PC-9 (cell line): ENCODE measurements at regions of chr1 and their contacts with region 1.

Region 1: GRCh38 chr1:50968158-50968820 is 1.8 kb upstream of the CDKN2C start:
- DNase-seq: peak; percentile 68 to 93
- H3K4me3 ChIP-seq: peak overlapping the region; percentile 86
- H3K27ac ChIP-seq: peak overlapping the region; percentile 62
- H3K4me1 ChIP-seq: peaks cover 24% of the 10 kb centered on the region
- H3K27me3 ChIP-seq: no peaks in the 10 kb centered on the region
- CTCF ChIP-seq: peak; percentile 38; the same call in 1 of the 2 replicates

Region 2: DNA sequence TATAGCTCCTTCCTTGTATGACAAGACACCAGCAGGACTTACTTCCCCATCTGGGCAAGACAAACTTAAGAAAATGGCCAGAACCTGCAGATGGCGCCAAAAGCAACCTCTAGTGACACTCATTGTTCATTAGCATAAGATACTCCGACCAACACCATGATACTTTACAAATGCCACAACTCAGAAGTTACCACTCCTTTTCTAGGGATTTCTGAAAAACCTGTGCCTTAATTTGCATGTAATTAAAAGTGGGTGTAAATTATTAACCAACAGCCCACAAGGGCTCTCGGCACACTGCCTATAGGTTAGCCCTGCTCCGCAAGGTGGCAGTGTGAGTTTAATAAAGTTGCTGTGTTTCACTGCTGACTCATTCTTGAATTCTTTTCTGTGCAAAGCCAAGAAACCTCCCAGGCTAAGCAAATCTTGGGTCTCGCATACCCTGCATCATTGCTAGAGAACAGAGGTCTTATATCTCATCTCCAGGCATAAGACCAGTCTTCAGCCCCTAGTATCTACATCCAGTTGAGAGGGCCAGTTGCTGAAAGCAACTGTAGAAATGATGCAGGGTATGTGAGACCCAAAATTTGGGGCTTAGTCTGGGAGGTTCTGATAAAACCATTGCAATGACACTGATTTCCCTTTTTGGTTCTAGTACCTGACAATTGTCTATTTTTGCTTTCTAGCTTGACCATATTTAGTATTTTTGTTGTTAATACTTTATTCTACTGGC is 94.7 kb before region 1 on chr1:
- CTCF ChIA-PET with region 1: interaction called, 3 read pairs
- POLR2A ChIA-PET with region 1: no interaction called
- intact Hi-C with region 1: loop called (anchors 5 kb)
- DNase-seq: peak; percentile 49 to 63
- H3K4me3 ChIP-seq: no peak overlapping the region
- H3K27ac ChIP-seq: no peak overlapping the region
- H3K4me1 ChIP-seq: no peaks in the 10 kb centered on the region
- H3K27me3 ChIP-seq: no peaks in the 10 kb centered on the region
- CTCF ChIP-seq: peak; percentile 61; the same call in 1 of the 2 replicates

Region 3: GRCh38 chr1:50929376-50929958 is 38.8 kb before region 1 on chr1:
- CTCF ChIA-PET with region 1: interaction called, 4 read pairs
- POLR2A ChIA-PET with region 1: no interaction called
- intact Hi-C with region 1: loop called (anchors 5 kb)
- DNase-seq: no peak
- H3K4me3 ChIP-seq: no peak overlapping the region
- H3K27ac ChIP-seq: peak overlapping the region; percentile 29; the same call in 1 of the 2 replicates
- H3K4me1 ChIP-seq: no peaks in the 10 kb centered on the region
- H3K27me3 ChIP-seq: no peaks in the 10 kb centered on the region
- CTCF ChIP-seq: peak; percentile 77

Region 4: GRCh38 chr1:50949286-50949982 is 18.9 kb before region 1 on chr1:
- CTCF ChIA-PET with region 1: no interaction called
- POLR2A ChIA-PET with region 1: interaction called, 12 read pairs
- intact Hi-C with region 1: no loop called
- DNase-seq: no peak
- H3K4me3 ChIP-seq: no peak overlapping the region
- H3K27ac ChIP-seq: no peak overlapping the region
- H3K4me1 ChIP-seq: no peaks in the 10 kb centered on the region
- H3K27me3 ChIP-seq: no peaks in the 10 kb centered on the region
- CTCF ChIP-seq: no peak

Region 5: GRCh38 chr1:51070640-51071039 is 102.4 kb after region 1 on chr1:
- CTCF ChIA-PET with region 1: no interaction called
- POLR2A ChIA-PET with region 1: no interaction called
- intact Hi-C with region 1: loop called (anchors 5 kb)
- DNase-seq: peak in 1 of 2 experiments; percentile 90
- H3K4me3 ChIP-seq: peak overlapping the region; percentile 9; the same call in 1 of the 2 replicates
- H3K27ac ChIP-seq: peak overlapping the region; percentile 94
- H3K4me1 ChIP-seq: peaks cover 28% of the 10 kb centered on the region
- H3K27me3 ChIP-seq: no peaks in the 10 kb centered on the region
- CTCF ChIP-seq: no peak

Region 6: DNA sequence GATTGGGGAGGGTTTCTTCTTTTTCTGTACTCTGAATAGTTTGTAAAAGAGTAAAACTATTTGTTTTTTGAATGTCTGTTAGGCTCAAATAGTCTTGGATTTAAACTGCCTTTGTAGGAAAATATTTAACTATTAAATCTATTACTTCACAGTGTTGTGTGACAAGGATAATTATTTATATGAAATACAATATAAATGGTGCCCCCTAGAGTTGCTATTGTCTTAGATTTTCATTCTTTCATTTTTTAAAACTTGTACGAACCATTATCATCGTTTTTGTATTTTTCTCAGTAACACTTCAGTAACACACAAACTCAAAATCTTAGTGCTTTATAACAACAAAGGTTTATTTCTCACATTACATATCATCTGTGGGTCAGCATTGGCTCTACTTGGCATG is 171.2 kb after region 1 on chr1:
- CTCF ChIA-PET with region 1: no interaction called
- POLR2A ChIA-PET with region 1: no interaction called
- intact Hi-C with region 1: loop called (anchors 5 kb)
- DNase-seq: no peak
- H3K4me3 ChIP-seq: no peak overlapping the region
- H3K27ac ChIP-seq: no peak overlapping the region
- H3K4me1 ChIP-seq: no peaks in the 10 kb centered on the region
- H3K27me3 ChIP-seq: no peaks in the 10 kb centered on the region
- CTCF ChIP-seq: peak; percentile 50; the same call in 1 of the 2 replicates

Region 7: DNA sequence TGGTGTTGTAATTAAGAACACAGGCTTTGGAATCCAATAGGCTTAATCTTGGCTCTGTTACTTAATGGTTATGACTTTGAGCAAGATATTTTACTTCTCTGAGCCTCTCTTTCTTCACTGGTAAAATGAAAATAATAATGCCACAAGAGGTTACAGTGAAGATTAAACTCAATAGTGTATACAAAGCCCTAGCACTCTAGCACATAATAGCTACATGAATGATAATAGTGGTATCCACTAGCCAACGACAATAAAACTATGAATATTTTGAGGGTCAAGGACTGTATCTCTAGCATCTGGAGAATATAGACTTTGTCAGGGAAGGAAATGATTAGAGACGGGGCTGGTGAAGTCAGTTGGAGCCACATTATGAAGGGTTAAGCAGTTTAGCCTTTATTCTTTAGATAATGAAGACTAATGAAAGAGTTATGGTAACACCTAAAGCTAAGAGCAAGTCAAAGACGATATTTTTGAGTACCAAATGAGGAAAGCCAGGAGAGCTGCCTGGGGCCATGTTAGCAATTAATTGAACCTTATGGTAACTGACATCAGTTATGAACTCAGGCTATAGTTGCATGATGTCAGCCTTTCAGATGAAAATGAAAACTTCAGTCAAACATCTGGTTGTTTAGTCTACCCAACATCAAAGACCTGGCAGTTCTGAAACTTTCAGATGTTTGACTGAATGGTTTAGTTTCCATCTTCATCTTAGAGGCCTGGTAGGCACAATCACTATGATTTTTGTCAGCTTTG is 235.0 kb after region 1 on chr1:
- CTCF ChIA-PET with region 1: no interaction called
- POLR2A ChIA-PET with region 1: no interaction called
- intact Hi-C with region 1: no loop called
- DNase-seq: no peak
- H3K4me3 ChIP-seq: no peak overlapping the region
- H3K27ac ChIP-seq: no peak overlapping the region
- H3K4me1 ChIP-seq: no peaks in the 10 kb centered on the region
- H3K27me3 ChIP-seq: no peaks in the 10 kb centered on the region
- CTCF ChIP-seq: no peak